Aorta (tissue), 5 donors: ENCODE measurements at regions of chr12 and their contacts with region 1.

Region 1: GRCh38 chr12:108803428-108804105 is 53.8 kb downstream of the SSH1 start:
- DNase-seq: peak; percentile 79 to 81
- ATAC-seq: peak; percentile 92
- H3K4me3 ChIP-seq: no peak overlapping the region
- H3K27ac ChIP-seq: peak overlapping the region; percentile 74 to 98
- H3K4me1 ChIP-seq: peaks cover 0 to 5% of the 10 kb centered on the region in 2 donors
- H3K27me3 ChIP-seq: no peaks in the 10 kb centered on the region

Region 2: DNA sequence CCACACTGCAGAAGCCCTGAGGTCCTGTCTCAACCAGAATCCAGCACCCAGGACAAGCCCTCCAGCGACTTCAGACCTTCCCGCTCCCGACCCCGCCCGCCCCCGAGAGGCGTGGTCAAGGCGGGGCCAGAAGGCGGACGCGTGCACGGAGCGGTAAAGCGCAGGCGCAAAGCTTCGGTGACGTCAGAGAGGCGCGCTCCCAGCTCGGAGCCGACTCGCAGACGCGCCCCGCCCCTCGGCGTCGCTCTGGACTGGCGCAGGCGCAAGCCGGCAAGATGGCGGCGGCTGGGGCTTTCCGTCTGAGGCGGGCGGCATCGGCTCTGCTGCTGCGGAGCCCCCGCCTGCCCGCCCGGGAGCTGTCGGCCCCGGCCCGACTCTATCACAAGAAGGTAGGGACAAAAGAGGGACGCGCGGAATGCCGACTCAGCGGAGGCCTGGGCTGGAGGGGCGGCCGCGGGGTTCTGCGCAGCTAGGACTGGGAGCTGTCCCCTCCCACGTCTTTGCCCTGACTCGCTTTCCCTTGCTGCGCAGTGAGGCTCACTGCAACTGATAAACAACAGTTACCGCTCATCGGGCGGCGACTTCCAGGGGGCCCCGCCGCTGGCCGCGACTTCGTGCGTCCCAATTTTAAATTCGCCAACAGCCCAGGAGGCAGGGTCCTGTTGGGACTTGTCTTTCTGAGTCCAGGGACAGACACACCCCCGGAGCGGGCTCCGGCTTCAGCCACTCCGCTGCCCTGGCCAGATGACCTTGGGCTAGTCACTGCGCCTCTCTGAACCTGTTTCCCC is 241.0 kb before region 1 on chr12 and contains the start of gene ISCU:
- intact Hi-C with region 1: loop called (anchors 2 kb)
- DNase-seq: peak; percentile 99 to 100
- ATAC-seq: peak; percentile 95
- H3K4me3 ChIP-seq: peak within 1 kb of the TSS; percentile 60 to 88
- H3K27ac ChIP-seq: peak within 1 kb of the TSS in 1 of 2 donors; percentile 87
- H3K4me1 ChIP-seq: peaks cover 0 to 9% of the 10 kb centered on the region in 2 donors
- H3K27me3 ChIP-seq: no peaks in the 10 kb centered on the region
- total RNA-seq, gene ISCU: 129 to 144 TPM

Region 3: GRCh38 chr12:108664338-108665258 is 139.0 kb before region 1 on chr12:
- intact Hi-C with region 1: loop called (anchors 2 kb)
- DNase-seq: peak; percentile 83 to 88
- ATAC-seq: peak; percentile 98
- H3K4me3 ChIP-seq: no peak overlapping the region
- H3K27ac ChIP-seq: peak overlapping the region; percentile 82 to 97
- H3K4me1 ChIP-seq: peaks cover 0 to 8% of the 10 kb centered on the region in 2 donors
- H3K27me3 ChIP-seq: no peaks in the 10 kb centered on the region

Region 4: DNA sequence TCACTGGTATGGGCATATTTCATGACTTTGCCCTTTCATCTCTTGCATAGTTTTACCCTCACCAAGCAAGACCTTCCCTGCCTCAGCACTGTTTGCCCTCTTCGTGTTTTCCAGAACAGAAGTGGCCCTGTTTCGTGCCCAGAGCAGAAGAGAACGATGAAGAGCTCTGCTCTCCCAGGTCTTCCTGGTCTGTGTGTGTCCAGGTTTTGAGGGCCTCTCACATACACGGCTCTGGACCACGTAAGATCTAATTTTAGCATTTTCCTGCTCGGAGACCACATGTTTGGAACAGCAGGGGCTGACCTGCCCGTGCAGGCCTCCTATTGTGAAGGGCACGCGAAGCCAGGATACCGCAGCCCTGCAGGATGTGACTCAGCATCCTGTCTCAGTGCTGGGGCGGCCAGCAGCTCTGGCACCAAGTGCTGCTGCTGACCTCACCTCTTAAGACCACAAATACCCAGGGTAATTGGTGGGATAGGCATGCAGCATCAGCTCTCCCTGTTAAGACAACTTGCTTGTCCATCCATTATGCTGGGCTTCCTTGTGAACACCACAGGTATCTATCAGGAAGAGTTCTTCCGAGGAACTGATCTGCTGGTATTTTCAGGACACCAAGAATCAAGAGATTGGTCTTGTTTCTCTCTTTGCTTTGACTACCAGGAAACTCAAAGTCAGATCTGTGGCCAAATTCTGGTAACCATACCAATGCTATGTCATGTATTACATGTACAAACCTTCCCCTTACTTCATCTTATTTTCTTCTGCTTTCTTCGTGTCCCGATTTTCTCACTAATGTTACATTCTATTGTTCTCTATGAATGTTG is 34.8 kb after region 1 on chr12:
- intact Hi-C with region 1: loop called in 1 of 2 experiments (anchors 5 kb)
- DNase-seq: peak; percentile 96
- ATAC-seq: peak; percentile 93
- H3K4me3 ChIP-seq: no peak overlapping the region
- H3K27ac ChIP-seq: peak overlapping the region; percentile 96 to 100
- H3K4me1 ChIP-seq: peaks cover 0 to 9% of the 10 kb centered on the region in 2 donors
- H3K27me3 ChIP-seq: no peaks in the 10 kb centered on the region

Region 5: GRCh38 chr12:108856428-108857157 is 53.0 kb after region 1 on chr12:
- intact Hi-C with region 1: loop called (anchors 2 to 5 kb)
- DNase-seq: peak; percentile 88 to 90
- ATAC-seq: peak; percentile 42
- H3K4me3 ChIP-seq: peak overlapping the region; percentile 79 to 87
- H3K27ac ChIP-seq: peak overlapping the region; percentile 83 to 94
- H3K4me1 ChIP-seq: peaks cover 0 to 3% of the 10 kb centered on the region in 2 donors
- H3K27me3 ChIP-seq: no peaks in the 10 kb centered on the region

Region 6: GRCh38 chr12:108884116-108885012 is 80.8 kb after region 1 on chr12:
- intact Hi-C with region 1: no loop called
- DNase-seq: peak; percentile 76 to 85
- ATAC-seq: no peak
- H3K4me3 ChIP-seq: no peak overlapping the region
- H3K27ac ChIP-seq: no peak overlapping the region
- H3K4me1 ChIP-seq: no peaks in the 10 kb centered on the region
- H3K27me3 ChIP-seq: no peaks in the 10 kb centered on the region

Region 7: DNA sequence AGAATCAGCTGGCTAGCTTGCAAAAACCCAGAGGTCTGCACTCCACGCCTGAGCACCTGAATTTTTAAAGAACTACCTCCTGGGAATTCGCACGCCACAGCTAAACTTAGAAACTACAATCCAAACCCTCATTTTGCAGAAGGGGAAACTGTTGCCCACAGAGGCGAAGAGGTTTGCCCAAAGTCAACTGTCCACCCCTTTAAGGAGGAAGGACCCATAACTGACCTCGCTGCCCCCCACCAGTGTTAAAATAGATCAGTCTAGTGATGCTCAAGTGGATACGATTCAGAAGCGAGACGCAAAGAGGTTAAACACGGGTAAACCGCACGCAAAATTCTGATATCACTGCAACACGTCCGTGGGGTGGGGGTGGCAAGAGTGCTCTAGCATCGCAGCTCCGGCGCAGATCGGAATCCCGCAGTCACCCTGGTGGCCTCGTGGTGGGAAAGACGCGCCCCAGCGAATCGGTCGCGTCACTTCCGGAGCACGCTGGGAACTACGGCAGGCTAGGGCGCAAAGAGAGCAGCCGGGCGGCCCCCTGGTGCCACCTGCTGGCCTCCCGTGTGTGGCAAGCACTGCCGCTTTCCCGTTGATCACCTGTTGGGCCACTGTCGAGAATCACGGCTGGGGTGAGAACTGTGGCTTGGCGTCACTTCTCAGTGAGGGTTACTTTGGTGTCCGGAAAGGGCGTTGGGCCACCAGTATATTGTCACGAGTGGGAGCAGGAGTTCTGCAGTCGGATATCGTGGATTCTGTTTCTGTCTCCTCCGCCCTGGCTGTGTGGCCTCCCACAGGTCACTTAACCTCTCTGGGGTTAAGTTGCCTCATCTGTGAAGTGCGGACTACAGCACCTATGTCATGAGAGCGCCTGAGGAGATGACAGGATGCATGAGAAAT is 289.7 kb after region 1 on chr12 and contains the start of gene ALKBH2:
- intact Hi-C with region 1: loop called in 1 of 2 experiments (anchors 10 kb)
- DNase-seq: peak; percentile 96 to 98
- ATAC-seq: peak; percentile 87
- H3K4me3 ChIP-seq: peak within 1 kb of the TSS; percentile 62 to 85
- H3K27ac ChIP-seq: peak within 1 kb of the TSS in 1 of 2 donors; percentile 34
- H3K4me1 ChIP-seq: no peaks in the 10 kb centered on the region
- H3K27me3 ChIP-seq: no peaks in the 10 kb centered on the region
- total RNA-seq, gene ALKBH2: 11.0 to 12.6 TPM